Adrenal gland (tissue), 19 donors: ENCODE measurements at regions of chr6 and their contacts with region 1.

Region 1: GRCh38 chr6:121430514-121431460 is 4.7 kb upstream of the GJA1 start:
- DNase-seq: no peak
- H3K4me3 ChIP-seq: no peak overlapping the region
- H3K27ac ChIP-seq: no peak overlapping the region
- H3K4me1 ChIP-seq: peaks cover 5 to 6% of the 10 kb centered on the region in 2 donors
- H3K27me3 ChIP-seq: no peaks in the 10 kb centered on the region
- CTCF ChIP-seq: peak; percentile 40 to 95 (median 77)
- POLR2A ChIP-seq: no peak

Region 2: GRCh38 chr6:121573481-121573880 is 142.7 kb after region 1 on chr6:
- intact Hi-C with region 1: no loop called
- DNase-seq: peak in 6 of 7 donors; percentile 36 to 71 (median 57)
- H3K4me3 ChIP-seq: no peak overlapping the region
- H3K27ac ChIP-seq: peak overlapping the region; percentile 6 to 83 (median 82)
- H3K4me1 ChIP-seq: peaks cover 16 to 20% of the 10 kb centered on the region in 2 donors
- H3K27me3 ChIP-seq: no peaks in the 10 kb centered on the region
- CTCF ChIP-seq: no peak
- POLR2A ChIP-seq: no peak

Region 3: DNA sequence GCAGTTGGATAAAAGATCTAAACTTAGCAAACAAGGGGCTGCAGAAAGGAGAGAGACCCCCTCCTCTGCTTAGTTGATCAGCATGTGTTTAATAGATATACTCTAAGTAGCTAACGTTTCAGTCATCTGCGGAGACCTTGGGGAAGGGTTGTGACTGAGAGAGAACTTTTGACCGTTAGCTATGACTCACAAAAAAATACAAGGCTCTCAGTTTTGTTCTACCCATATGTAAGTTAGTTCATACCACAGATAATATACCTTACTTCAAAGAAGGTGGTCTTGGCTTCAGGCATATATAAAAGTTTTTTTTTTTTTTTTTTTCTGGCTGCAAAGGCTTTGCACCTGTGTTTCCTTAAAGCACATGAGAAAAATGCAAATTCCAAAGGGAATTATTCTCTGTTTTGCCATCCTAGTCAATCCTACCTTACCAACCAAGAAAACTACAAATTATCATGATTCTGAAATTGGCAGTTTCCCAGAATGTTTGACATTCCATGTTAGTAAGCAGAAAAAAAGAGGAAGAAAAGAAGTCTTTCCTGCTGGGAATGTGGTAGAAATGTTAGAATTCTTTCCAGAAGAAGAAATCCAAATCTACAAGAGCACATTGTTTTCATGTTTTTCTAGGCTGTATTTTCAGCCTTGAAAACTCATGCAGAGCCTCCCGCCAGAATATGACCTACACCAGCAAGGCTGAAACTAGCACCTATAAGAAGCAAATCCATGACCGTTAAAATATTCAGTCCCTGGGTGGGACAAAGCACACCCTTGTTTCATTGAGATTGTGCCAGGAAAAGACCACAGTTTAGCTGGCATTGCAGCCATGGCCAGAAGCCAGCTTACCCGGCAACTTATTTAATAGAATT is 263.8 kb after region 1 on chr6:
- intact Hi-C with region 1: loop called in 1 of 2 experiments (anchors 10 kb)
- DNase-seq: peak in 5 of 7 donors; percentile 28 to 48 (median 41)
- H3K4me3 ChIP-seq: no peak overlapping the region
- H3K27ac ChIP-seq: peak overlapping the region in 4 of 5 donors; percentile 1 to 69 (median 56)
- H3K4me1 ChIP-seq: peaks cover 25 to 43% of the 10 kb centered on the region in 2 donors
- H3K27me3 ChIP-seq: no peaks in the 10 kb centered on the region
- CTCF ChIP-seq: no peak
- POLR2A ChIP-seq: no peak

Region 4: DNA sequence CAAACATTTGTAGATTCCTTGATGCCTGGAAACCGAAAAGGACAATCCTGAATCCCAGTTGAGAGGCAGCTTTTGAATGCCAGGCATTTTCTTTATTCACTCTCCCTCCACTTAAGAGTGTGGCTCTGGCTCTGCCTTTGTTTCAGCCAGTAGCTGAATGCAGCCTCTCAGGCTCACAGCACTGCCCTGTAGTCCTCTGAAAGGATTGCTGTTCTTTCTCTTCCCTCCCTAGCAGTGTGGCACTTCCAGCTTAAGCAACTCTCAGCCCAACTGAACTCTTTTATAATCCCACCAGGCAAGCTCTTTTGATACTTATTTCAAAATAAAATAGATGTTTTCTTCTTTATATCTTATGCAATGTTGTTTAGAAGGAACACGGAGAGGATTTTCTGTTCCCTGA is 420.3 kb after region 1 on chr6:
- intact Hi-C with region 1: loop called (anchors 10 kb)
- DNase-seq: no peak
- H3K4me3 ChIP-seq: no peak overlapping the region
- H3K27ac ChIP-seq: no peak overlapping the region
- H3K4me1 ChIP-seq: no peaks in the 10 kb centered on the region
- H3K27me3 ChIP-seq: no peaks in the 10 kb centered on the region
- CTCF ChIP-seq: no peak
- POLR2A ChIP-seq: no peak

Region 5: DNA sequence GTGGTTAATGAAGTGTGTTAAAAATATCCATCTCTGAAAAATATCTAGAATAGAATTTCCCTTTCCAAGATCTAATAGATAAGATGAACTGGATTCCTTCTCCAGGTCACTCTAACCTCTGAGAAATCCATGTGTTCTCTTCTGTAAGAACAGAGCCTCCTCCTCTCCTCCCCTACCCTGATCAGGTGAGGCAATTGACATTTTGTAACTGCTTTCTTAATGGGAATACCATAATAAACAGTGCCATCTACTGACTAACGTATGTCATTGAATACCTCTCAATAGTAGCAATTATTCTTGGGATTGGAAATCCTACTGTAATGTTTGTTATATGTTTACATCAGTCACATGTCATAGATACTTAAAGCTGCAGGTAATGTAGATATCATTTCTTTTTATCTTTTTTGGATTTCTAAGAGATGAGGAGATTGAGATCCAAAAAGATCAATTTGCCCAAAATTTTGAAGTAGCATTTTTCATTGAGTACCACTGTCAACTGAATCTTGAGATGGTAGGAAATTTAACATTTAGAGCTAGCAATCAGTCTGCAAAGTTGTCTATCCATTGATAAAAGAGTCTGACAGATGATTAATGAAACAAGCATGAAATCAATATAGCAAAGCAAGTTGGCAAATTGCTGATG is 602.9 kb after region 1 on chr6:
- intact Hi-C with region 1: loop called (anchors 5 to 10 kb)
- DNase-seq: peak in 2 of 7 donors; percentile 8 to 36
- H3K4me3 ChIP-seq: no peak overlapping the region
- H3K27ac ChIP-seq: no peak overlapping the region
- H3K4me1 ChIP-seq: no peaks in the 10 kb centered on the region
- H3K27me3 ChIP-seq: no peaks in the 10 kb centered on the region
- CTCF ChIP-seq: peak; percentile 44 to 81 (median 72)
- POLR2A ChIP-seq: no peak